ENCODE measurements at regions of chr12 and their contacts with region 1.

Region 1: DNA sequence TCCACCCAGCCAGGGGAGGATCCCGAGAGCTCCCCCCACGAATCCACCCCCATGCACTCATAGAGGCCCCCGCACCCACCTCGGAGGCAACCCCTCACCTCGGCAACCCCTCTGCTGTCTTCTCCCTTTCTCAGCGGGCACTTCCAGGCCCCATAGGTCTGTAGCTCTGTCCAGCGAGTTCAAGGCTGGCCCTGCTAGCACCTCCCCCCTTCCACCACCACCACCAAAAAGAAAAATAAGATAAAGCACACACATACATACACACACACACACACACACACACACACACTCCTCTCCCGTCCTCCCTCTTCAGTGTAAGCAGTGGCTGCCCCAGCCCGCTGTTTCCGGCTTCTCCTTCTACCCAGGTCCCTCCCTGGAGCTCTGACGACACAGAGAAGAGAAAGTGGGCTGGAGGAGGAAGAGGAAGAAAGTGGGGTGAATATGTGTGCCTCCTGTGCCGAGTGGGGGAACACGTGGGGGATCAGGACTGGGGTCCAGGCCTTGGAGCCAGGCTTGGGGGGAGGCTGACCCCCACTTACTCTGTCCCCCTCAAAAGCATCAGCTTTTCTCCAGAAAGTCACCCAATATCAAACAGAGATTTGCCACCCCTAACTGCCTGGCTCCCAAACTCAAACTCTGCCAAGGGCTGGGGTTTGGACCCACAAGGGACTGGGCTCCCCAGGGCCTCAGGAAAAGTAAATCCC is at the start of gene STAT6:
- DNase-seq: peak in 1 of 2 experiments; percentile 53
- H3K4me3 ChIP-seq: peak within 1 kb of the TSS; percentile 43
- H3K4me3 Mint-ChIP-seq: peak within 1 kb of the TSS; percentile 89
- H3K27ac Mint-ChIP-seq: peak within 1 kb of the TSS; percentile 84
- H3K4me1 ChIP-seq: 0 out of 2 replicates have a peak, but pooled peaks cover 3% of the 10 kb centered on the region
- H3K4me1 Mint-ChIP-seq: peaks cover 13% of the 10 kb centered on the region
- H3K27me3 ChIP-seq: no peaks in the 10 kb centered on the region
- H3K27me3 Mint-ChIP-seq: no peaks in the 10 kb centered on the region
- CTCF ChIP-seq: no peak
- total RNA-seq, gene STAT6: 44.2 and 49.5 TPM in 2 replicates

Region 2: DNA sequence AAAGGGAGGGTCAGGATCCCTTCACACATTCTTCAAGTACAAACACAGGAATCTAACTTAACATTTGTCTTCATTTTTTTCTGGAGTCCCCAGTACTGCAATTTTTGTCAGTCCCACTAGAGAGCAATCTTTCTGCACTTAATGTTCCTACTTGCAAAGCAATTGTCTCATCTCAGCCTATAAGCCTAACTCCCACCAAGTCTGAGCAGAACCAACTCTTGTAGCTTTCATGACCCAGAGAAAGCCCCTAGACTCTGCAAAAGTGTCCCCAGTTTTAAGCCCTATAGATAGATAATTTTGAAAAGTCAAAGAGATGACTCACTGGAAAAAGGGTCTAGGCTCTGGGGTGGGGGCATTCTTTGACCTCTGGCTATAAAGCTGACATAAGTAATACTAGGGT is 103.0 kb before region 1 on chr12:
- CTCF ChIA-PET with region 1: interaction called, 19 read pairs
- POLR2A ChIA-PET with region 1: interaction called, 11 read pairs
- intact Hi-C with region 1: loop called (anchors 1 kb)
- DNase-seq: peak in 1 of 2 experiments; percentile 61
- H3K4me3 ChIP-seq: no peak overlapping the region
- H3K4me3 Mint-ChIP-seq: no peak overlapping the region
- H3K27ac Mint-ChIP-seq: peak overlapping the region; percentile 34
- H3K4me1 ChIP-seq: peaks cover 17% of the 10 kb centered on the region
- H3K4me1 Mint-ChIP-seq: peaks cover 35% of the 10 kb centered on the region
- H3K27me3 ChIP-seq: no peaks in the 10 kb centered on the region
- H3K27me3 Mint-ChIP-seq: no peaks in the 10 kb centered on the region
- CTCF ChIP-seq: peak; percentile 49 to 71

Region 3: DNA sequence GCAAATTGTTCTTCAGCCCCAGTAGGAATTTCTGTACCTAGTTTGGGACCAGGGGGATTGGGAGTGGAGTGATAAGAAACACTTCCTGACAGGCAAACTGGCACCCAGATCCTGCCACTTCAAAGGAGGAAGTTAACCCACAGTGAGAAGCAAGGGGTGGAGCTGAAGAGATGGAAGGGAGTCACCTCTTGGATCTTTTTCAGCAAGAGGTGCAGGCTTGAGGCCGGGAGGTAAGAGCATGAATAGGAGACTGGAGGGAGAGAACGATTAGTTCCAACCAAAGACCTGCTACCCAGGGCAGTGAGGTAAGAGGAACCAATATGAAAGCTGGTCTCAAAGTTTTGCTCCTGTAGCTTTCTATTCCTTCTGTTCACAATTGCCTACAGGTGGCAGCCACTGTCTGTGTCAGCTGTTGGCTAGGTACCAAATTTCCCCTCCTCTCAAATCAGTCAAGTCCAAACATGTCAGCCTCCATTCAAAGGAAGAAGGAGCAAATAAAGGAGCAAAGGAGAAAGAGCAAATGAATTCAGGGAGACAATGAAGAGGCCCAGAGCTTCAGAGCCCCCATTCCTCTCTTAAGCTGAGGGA is 80.0 kb before region 1 on chr12:
- CTCF ChIA-PET with region 1: interaction called, 16 read pairs
- POLR2A ChIA-PET with region 1: interaction called, 4 read pairs
- intact Hi-C with region 1: no loop called
- DNase-seq: no peak
- H3K4me3 ChIP-seq: no peak overlapping the region
- H3K4me3 Mint-ChIP-seq: no peak overlapping the region
- H3K27ac Mint-ChIP-seq: no peak overlapping the region
- H3K4me1 ChIP-seq: no peaks in the 10 kb centered on the region
- H3K4me1 Mint-ChIP-seq: peaks cover 8% of the 10 kb centered on the region
- H3K27me3 ChIP-seq: no peaks in the 10 kb centered on the region
- H3K27me3 Mint-ChIP-seq: no peaks in the 10 kb centered on the region
- CTCF ChIP-seq: peak in 1 of 2 experiments; percentile 36

Region 4: DNA sequence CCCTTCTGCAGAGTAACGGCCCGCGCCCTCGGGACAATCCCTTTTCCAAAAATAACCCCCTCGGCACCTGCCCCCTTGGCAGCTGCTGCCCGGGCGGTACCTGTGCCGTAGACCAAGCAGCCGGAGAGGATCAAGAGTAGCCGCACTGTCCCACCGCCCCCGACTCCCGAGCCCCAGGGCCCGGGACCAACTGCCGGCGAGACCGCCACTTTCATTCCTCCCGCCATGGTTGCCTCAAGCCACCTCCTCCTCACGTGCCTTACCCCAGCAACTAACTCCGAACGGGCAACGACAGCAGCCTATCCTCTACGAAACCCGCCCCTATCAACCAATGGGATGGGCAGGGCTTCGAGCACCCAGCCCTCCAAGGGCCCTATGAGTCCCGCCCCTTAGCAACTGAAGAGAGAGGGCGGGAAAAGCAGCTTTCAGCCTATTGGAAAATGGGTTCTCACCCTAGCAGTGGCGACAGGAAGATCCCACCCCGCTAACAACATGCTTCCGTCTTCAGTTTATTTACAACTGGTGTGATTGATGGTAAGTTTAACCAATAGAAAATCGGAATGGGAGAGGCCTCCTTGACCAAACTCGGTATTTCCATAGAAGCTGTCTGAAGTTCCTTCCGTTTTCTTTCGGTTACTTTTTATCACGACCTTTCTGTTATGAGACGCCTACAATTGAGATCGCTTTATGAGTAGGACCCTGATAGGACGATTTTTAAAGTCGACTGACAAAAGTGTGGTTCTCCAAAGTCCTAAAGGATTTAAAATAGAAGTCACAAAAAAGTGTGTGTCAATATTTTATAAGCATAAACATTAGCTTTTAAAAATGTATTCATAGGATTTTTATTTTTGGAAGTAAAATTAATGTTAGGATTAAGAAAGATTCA is 32.4 kb before region 1 on chr12 and contains the start of gene NEMP1:
- CTCF ChIA-PET with region 1: interaction called, 33 read pairs
- POLR2A ChIA-PET with region 1: interaction called, 40 read pairs
- intact Hi-C with region 1: no loop called
- DNase-seq: peak; percentile 97 to 99
- H3K4me3 ChIP-seq: peak within 1 kb of the TSS; percentile 75
- H3K4me3 Mint-ChIP-seq: peak within 1 kb of the TSS; percentile 98
- H3K27ac Mint-ChIP-seq: peak within 1 kb of the TSS; percentile 92
- H3K4me1 ChIP-seq: 0 out of 2 replicates have a peak, but pooled peaks cover 4% of the 10 kb centered on the region
- H3K4me1 Mint-ChIP-seq: no peaks in the 10 kb centered on the region
- H3K27me3 ChIP-seq: no peaks in the 10 kb centered on the region
- H3K27me3 Mint-ChIP-seq: no peaks in the 10 kb centered on the region
- CTCF ChIP-seq: no peak
- total RNA-seq, gene NEMP1: 38.3 and 40.1 TPM in 2 replicates

Region 5: GRCh38 chr12:57096099-57096572 is 15.0 kb before region 1 on chr12:
- CTCF ChIA-PET with region 1: interaction called, 36 read pairs
- POLR2A ChIA-PET with region 1: interaction called, 15 read pairs
- intact Hi-C with region 1: no loop called
- DNase-seq: no peak
- H3K4me3 ChIP-seq: no peak overlapping the region
- H3K4me3 Mint-ChIP-seq: no peak overlapping the region
- H3K27ac Mint-ChIP-seq: no peak overlapping the region
- H3K4me1 ChIP-seq: peaks cover 6% of the 10 kb centered on the region; the same call in 1 of the 2 replicates
- H3K4me1 Mint-ChIP-seq: peaks cover 9% of the 10 kb centered on the region
- H3K27me3 ChIP-seq: no peaks in the 10 kb centered on the region
- H3K27me3 Mint-ChIP-seq: no peaks in the 10 kb centered on the region
- CTCF ChIP-seq: no peak

Region 6: DNA sequence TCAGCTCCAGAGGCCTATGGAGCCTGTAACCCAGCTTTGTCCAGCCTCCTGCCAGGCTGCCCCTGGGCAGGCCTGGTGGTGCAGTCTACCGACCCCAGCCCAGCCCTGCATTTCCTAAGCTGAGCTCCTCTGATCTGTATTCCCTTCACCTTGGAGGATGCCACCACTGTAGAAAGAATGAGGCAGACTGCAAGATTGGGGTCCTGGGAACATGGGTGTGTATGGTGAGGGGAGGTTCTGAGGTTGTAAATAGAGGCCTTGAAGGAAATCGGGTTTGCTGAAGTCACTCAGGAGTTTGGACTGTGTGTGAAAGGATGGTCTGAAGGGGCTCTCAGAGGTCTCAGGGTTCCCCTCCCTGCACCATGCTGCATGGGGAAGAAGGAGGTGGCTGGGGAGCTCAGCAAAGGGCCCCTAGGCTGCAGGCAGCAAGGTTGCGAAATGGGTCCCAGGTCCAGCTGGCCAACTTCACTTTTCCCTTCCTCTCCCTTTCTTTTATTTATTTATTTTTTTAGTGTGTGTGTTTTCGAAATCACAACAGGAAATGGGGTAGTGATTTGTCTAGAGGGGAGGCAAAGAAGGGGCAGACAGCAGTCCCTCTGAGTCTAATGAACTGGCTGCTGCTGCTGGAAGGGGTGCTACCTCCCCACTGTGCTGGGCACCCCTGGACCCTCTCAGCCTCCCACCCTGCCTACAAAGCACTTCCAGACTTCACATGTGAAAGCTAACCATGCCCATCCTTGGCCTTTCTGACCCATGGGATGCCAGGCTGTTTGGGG is 37.5 kb after region 1 on chr12:
- CTCF ChIA-PET with region 1: interaction called, 12 read pairs
- POLR2A ChIA-PET with region 1: no interaction called
- intact Hi-C with region 1: no loop called
- DNase-seq: peak; percentile 56 to 60
- H3K4me3 ChIP-seq: no peak overlapping the region
- H3K4me3 Mint-ChIP-seq: peak overlapping the region; percentile 17
- H3K27ac Mint-ChIP-seq: peak overlapping the region; percentile 97
- H3K4me1 ChIP-seq: peaks cover 44% of the 10 kb centered on the region
- H3K4me1 Mint-ChIP-seq: peaks cover 51% of the 10 kb centered on the region
- H3K27me3 ChIP-seq: no peaks in the 10 kb centered on the region
- H3K27me3 Mint-ChIP-seq: no peaks in the 10 kb centered on the region
- CTCF ChIP-seq: no peak

Region 7: DNA sequence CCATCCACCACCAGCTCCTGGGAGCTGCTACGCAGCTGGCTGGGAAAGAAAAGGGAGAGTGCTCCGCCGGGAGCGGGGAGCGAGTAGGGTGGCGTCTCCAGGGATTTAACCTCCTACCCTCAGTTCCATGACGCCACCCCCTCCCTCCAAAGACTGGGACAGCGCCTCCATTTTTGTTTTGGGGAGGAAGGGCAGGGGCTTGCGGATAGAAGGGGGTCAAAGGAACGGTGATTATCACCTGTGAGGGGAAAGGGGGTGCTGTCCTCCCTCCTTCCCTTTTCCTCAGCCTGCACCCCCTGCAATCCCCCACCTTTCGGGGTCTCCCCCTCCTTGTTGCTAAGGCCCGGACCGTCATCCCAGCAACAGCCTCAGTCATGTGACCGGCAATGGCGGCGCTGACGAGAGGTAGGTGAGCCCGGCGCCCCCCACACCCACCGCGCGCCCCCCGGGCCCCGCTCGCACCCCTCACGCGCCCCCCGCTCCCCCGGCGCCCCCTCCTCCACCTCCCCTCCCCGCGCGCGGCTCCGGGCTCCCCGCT is 493.3 kb after region 1 on chr12 and contains the start of gene DTX3:
- CTCF ChIA-PET with region 1: no interaction called
- POLR2A ChIA-PET with region 1: no interaction called
- intact Hi-C with region 1: no loop called
- DNase-seq: peak in 1 of 2 experiments; percentile 33
- H3K4me3 ChIP-seq: peak within 1 kb of the TSS; percentile 62
- H3K4me3 Mint-ChIP-seq: peak within 1 kb of the TSS; percentile 74
- H3K27ac Mint-ChIP-seq: peak within 1 kb of the TSS; percentile 77
- H3K4me1 ChIP-seq: peaks cover 6% of the 10 kb centered on the region; the same call in 1 of the 2 replicates
- H3K4me1 Mint-ChIP-seq: peaks cover 7% of the 10 kb centered on the region
- H3K27me3 ChIP-seq: no peaks in the 10 kb centered on the region
- H3K27me3 Mint-ChIP-seq: no peaks in the 10 kb centered on the region
- CTCF ChIP-seq: no peak
- total RNA-seq, gene DTX3: 17.4 and 20.4 TPM in 2 replicates

Measured in Caco-2 (cell line).